ENCODE measurements at regions of chr12 and their contacts with region 1.

Region 1: DNA sequence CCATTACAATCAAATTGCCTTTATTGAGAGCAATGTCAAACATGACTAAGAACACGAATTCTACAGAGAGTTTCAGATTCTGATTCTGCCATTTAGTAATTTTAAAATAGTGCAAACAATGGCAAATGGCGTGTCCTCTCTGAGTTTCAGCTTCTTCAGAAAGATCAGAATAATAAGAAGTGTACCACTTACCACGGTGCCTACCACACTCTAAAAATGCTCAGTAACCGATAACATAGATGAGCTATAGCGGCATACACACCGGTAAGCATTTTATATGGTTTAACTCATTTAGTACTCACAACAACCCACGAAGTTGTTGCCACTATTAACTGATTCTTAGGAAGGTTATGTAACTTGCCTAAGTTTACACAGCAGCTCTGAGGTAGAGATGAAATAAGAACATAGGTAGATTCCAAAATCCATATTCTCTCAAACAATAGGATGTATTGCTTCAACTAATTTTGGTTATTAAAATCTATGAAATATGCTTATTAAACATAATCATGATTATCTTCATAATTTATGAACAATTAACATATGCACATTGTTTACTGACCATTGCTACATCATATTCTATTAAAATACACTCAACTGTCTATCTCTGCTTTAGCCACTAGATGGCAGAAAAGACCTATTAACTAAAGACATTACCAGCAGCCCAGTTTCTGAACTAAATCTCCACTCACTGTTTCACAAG is 38.3 kb downstream of the SLC6A15 start:
- DNase-seq: peak in 2 of 5 donors; percentile 62 to 73
- H3K4me3 ChIP-seq: no peak overlapping the region
- H3K27ac ChIP-seq: no peak overlapping the region
- H3K4me1 ChIP-seq: no peaks in the 10 kb centered on the region
- H3K27me3 ChIP-seq: no peaks in the 10 kb centered on the region
- CTCF ChIP-seq: peak; percentile 71

Region 2: GRCh38 chr12:84950971-84951546 is 76.8 kb after region 1 on chr12:
- intact Hi-C with region 1: no loop called
- DNase-seq: no peak
- H3K4me3 ChIP-seq: no peak overlapping the region
- H3K27ac ChIP-seq: no peak overlapping the region
- H3K4me1 ChIP-seq: no peaks in the 10 kb centered on the region
- H3K27me3 ChIP-seq: no peaks in the 10 kb centered on the region
- CTCF ChIP-seq: no peak

Region 3: GRCh38 chr12:85029456-85029855 is 155.2 kb after region 1 on chr12:
- intact Hi-C with region 1: loop called (anchors 10 kb)
- DNase-seq: peak in 2 of 5 donors; percentile 35 to 49
- H3K4me3 ChIP-seq: no peak overlapping the region
- H3K27ac ChIP-seq: no peak overlapping the region
- H3K4me1 ChIP-seq: no peaks in the 10 kb centered on the region
- H3K27me3 ChIP-seq: no peaks in the 10 kb centered on the region
- CTCF ChIP-seq: peak; percentile 51

Measured in kidney (tissue), 22 donors.